Sigmoid colon (tissue), 7 donors: ENCODE measurements at regions of chr2 and their contacts with region 1.

Region 1: DNA sequence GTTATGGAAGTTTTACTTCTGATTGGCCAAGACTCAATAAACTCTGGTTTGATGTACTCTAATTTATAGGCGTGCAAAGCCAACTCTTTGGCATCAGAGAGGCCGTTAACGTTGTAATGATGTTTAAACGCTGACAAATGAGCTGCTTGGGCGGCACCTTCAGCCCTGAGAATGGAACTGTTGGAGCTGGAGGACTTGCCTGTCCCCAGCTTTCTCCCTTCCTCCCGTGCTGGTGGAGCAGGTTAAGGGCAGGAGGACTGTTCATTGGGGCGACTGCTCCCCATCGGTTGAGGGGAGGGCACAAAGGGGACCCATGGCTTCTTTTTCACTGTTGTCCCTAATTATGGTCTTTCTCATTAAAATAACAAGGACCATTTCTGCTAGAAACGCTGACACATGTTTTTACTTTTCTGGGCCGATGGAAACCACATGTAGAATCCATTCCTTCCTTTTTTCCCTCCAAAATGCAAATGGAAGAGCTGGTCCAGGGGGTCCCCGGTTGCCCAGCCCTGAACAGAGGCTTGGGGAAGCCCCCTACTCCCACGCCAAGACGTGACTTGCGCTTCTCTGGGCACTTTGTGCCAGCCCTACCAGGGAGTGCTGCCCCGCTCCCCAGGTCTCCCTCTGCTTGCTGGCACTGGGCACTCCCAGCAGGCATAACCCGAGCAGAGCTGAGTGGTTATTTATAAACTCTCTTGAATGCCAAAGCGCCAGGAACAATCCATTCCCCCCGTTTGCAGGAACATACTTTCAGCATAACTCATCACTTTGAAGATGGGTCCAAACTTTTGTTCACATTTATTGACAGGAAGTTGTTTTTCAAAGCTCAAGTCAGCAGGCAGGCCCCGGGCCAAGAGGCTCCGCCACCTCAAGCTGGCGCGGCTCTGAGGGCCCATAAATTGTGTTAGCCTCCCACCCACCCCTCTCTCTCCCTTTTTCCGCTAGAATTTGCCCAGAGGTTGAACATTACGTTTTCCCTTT is 170.1 kb downstream of the ASB1 start:
- DNase-seq: peak; percentile 93
- H3K4me3 ChIP-seq: no peak overlapping the region
- H3K27ac ChIP-seq: peak overlapping the region; percentile 80 to 91 (median 85)
- H3K4me1 ChIP-seq: peaks cover 0 to 60% (median 48%) of the 10 kb centered on the region in 4 donors
- H3K27me3 ChIP-seq: no peaks in the 10 kb centered on the region
- CTCF ChIP-seq: no peak
- EP300 ChIP-seq: peak; percentile 92 to 99 (median 97)
- POLR2A ChIP-seq: no peak

Region 2: DNA sequence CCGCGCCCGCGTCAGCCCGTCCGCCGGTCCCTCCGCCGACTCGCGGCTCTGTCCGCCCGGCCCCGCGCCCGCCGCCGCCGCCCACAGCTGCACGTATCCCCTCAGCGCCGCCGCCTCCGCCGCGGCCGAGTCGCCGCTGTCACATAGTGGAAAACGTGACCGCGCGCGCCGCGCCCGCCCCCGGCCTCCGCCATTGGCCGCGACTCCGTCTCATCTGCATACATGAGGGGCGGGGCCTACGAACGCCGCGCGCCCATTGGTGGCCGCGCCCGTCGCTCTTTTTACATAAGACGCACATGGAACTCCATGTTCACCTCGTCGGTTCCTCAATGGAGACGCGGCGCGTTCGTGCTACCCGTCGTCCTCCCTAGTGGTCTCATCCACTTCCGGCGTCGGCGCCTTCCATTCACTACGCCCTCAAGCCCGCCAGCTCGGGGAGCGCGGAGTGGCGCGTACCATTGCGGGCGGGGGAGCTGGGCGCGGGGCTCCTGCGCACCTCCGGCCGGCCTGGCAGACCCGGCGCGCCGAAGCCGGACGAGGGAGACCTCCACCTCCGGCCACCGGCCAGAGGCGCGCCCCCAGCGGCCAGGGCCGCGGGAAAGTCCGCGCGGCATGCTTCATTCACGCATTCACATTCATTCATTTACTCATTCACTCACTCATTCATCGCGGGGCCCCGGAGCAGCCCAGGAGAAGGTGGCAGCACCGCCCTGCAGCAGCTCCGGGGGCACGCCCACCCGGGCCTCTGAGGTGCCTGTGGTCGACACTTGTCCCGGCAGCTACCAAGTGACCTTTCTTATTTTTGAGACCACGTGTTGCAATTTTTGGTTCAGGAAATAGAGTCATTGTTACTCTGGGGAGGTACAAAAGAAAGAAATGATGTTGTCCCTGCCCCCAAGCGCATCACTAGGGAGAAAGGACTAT is 307.9 kb before region 1 on chr2:
- intact Hi-C with region 1: loop called (anchors 5 kb)
- DNase-seq: peak; percentile 99
- H3K4me3 ChIP-seq: peak overlapping the region; percentile 77 to 86 (median 84)
- H3K27ac ChIP-seq: peak overlapping the region; percentile 93 to 97 (median 94)
- H3K4me1 ChIP-seq: peaks cover 0 to 50% (median 47%) of the 10 kb centered on the region in 4 donors
- H3K27me3 ChIP-seq: no peaks in the 10 kb centered on the region
- CTCF ChIP-seq: peak in 1 of 4 experiments; percentile 26
- EP300 ChIP-seq: peak in 1 of 4 donors; percentile 55
- POLR2A ChIP-seq: peak; percentile 26 to 50

Region 3: GRCh38 chr2:238523158-238524110 is 73.4 kb before region 1 on chr2:
- intact Hi-C with region 1: loop called (anchors 5 kb)
- DNase-seq: peak; percentile 97
- H3K4me3 ChIP-seq: peak overlapping the region in 2 of 4 donors; percentile 8 to 14
- H3K27ac ChIP-seq: peak overlapping the region; percentile 44 to 81 (median 63)
- H3K4me1 ChIP-seq: peaks cover 0 to 20% (median 15%) of the 10 kb centered on the region in 4 donors
- H3K27me3 ChIP-seq: no peaks in the 10 kb centered on the region
- CTCF ChIP-seq: peak; percentile 33 to 51 (median 40)
- EP300 ChIP-seq: peak in 2 of 4 donors; percentile 23 to 44
- POLR2A ChIP-seq: no peak

Region 4: GRCh38 chr2:238700117-238700457 is 103.2 kb after region 1 on chr2:
- intact Hi-C with region 1: no loop called
- DNase-seq: no peak
- H3K4me3 ChIP-seq: no peak overlapping the region
- H3K27ac ChIP-seq: peak overlapping the region in 2 of 4 donors; percentile 57 to 67
- H3K4me1 ChIP-seq: peaks cover 0 to 69% (median 52%) of the 10 kb centered on the region in 4 donors
- H3K27me3 ChIP-seq: no peaks in the 10 kb centered on the region
- CTCF ChIP-seq: no peak
- EP300 ChIP-seq: peak in 1 of 4 donors; percentile 25
- POLR2A ChIP-seq: no peak

Region 5: DNA sequence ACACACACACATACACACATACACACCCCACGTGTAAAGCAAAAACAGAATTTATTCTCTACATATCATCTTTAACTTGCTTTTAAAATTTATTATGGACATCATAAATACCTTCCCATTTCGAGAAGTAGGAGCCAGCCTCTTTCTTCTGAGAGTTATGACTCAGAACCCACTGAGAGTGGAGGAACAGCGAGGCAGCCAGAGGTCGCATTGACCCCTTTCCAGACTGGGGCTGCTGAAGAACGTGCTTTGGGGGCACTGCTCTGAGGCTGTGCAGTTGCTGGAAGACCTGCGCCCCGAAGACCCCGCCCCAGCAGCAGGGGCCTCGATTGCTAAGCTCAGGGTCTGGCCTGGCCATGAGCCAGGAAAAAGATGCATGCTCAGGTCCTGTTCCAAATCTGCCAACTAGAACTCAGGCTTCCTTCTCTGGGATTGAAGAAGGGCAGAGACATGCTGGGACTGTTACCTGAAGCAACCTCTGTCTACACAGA is 117.2 kb after region 1 on chr2:
- intact Hi-C with region 1: loop called (anchors 5 kb)
- DNase-seq: no peak
- H3K4me3 ChIP-seq: no peak overlapping the region
- H3K27ac ChIP-seq: peak overlapping the region; percentile 48 to 87 (median 80)
- H3K4me1 ChIP-seq: peaks cover 0 to 46% (median 29%) of the 10 kb centered on the region in 4 donors
- H3K27me3 ChIP-seq: no peaks in the 10 kb centered on the region
- CTCF ChIP-seq: no peak
- EP300 ChIP-seq: peak in 3 of 4 donors; percentile 34 to 74 (median 47)
- POLR2A ChIP-seq: no peak

Region 6: GRCh38 chr2:238784671-238785527 is 188.0 kb after region 1 on chr2:
- intact Hi-C with region 1: loop called (anchors 10 kb)
- DNase-seq: peak; percentile 88
- H3K4me3 ChIP-seq: no peak overlapping the region
- H3K27ac ChIP-seq: peak overlapping the region; percentile 27 to 53 (median 44)
- H3K4me1 ChIP-seq: peaks cover 0 to 17% (median 10%) of the 10 kb centered on the region in 4 donors
- H3K27me3 ChIP-seq: no peaks in the 10 kb centered on the region
- CTCF ChIP-seq: peak; percentile 77 to 92 (median 86)
- EP300 ChIP-seq: no peak
- POLR2A ChIP-seq: no peak

Region 7: DNA sequence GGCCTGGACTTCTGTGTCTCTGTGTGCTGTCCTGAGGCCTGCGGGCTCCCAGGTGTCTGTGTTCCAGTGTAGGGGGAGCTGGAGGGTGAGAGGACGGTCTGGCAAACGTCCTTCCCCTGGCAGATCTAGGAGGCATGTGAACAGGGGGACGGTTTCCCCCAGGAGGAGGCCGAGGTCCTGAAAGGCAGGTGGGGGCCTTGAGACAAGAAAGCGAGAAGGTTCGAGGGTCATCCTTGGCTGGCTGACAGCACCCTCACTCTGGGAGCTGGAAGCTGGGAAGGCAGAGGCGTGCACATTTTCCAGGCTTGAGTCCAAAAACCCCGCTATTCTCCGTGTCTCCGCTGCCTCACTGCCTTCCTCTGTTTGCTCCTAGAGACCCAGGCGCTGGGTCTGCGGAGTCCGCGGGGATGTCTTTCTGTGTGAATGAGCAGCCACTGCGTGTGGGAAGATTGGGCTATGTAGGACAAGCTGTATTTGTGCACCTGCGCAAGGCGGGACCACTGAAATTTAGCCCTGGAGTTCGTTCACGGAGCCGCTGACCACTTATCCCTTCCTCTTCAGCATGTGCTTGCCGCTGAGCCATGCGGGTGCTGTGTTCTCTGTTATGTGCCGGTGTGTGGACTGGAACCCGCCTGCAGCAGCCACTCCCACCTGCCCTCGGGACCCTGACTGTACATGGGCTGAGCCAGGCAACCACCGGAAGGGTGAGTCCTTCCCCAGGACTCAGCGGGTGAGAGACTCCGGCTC is 294.8 kb after region 1 on chr2:
- intact Hi-C with region 1: no loop called
- DNase-seq: peak; percentile 69
- H3K4me3 ChIP-seq: peak overlapping the region in 2 of 4 donors; percentile 13 to 26
- H3K27ac ChIP-seq: peak overlapping the region in 3 of 4 donors; percentile 51 to 83 (median 61)
- H3K4me1 ChIP-seq: peaks cover 0 to 60% (median 54%) of the 10 kb centered on the region in 4 donors
- H3K27me3 ChIP-seq: no peaks in the 10 kb centered on the region
- CTCF ChIP-seq: no peak
- EP300 ChIP-seq: no peak
- POLR2A ChIP-seq: no peak

Region 8: GRCh38 chr2:239006622-239007300 is 409.9 kb after region 1 on chr2:
- intact Hi-C with region 1: no loop called
- DNase-seq: no peak
- H3K4me3 ChIP-seq: no peak overlapping the region
- H3K27ac ChIP-seq: no peak overlapping the region
- H3K4me1 ChIP-seq: peaks cover 0 to 18% (median 15%) of the 10 kb centered on the region in 4 donors
- H3K27me3 ChIP-seq: peaks cover 0 to 15% (median 0%) of the 10 kb centered on the region in 3 donors
- CTCF ChIP-seq: no peak
- EP300 ChIP-seq: no peak
- POLR2A ChIP-seq: no peak

Region 9: GRCh38 chr2:239164335-239164871 is 567.5 kb after region 1 on chr2:
- intact Hi-C with region 1: no loop called
- DNase-seq: peak; percentile 47
- H3K4me3 ChIP-seq: no peak overlapping the region
- H3K27ac ChIP-seq: peak overlapping the region in 1 of 4 donors; percentile 73
- H3K4me1 ChIP-seq: peaks cover 0 to 42% (median 36%) of the 10 kb centered on the region in 4 donors
- H3K27me3 ChIP-seq: no peaks in the 10 kb centered on the region
- CTCF ChIP-seq: no peak
- EP300 ChIP-seq: no peak
- POLR2A ChIP-seq: no peak